ENCODE measurements at regions of chr7 and their contacts with region 1.

Region 1: GRCh38 chr7:80439894-80440821 is 71.7 kb downstream of the GNAT3 start:
- DNase-seq: no peak
- H3K4me3 ChIP-seq: no peak overlapping the region
- H3K27ac ChIP-seq: no peak overlapping the region
- H3K4me1 ChIP-seq: peaks cover 0 to 12% (median 0%) of the 10 kb centered on the region in 3 donors
- H3K27me3 ChIP-seq: no peaks in the 10 kb centered on the region
- CTCF ChIP-seq: no peak
- POLR2A ChIP-seq: no peak

Region 2: DNA sequence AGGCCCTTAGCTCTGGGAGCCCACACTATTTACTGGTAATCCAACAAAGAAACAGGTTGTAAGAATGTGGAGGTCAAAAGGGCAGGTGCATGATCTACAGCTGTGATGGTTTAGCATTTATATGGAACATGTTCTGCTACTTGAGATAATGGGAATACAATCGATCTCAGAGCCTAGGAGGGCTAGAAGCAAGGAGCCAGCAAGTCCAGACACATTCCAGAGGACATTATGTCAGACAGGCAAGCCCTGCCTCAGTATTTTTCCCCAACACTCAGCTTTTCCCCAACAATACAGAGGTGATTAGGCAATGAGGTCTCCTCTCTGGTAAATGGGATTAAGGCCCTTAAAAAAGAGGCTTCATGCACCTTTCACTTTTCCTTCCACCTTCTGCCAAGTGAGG is 93.1 kb after region 1 on chr7:
- intact Hi-C with region 1: no loop called
- DNase-seq: no peak
- H3K4me3 ChIP-seq: no peak overlapping the region
- H3K27ac ChIP-seq: no peak overlapping the region
- H3K4me1 ChIP-seq: peaks cover 0 to 5% (median 0%) of the 10 kb centered on the region in 3 donors
- H3K27me3 ChIP-seq: no peaks in the 10 kb centered on the region
- CTCF ChIP-seq: no peak
- POLR2A ChIP-seq: no peak

Region 3: GRCh38 chr7:80596933-80597517 is 156.9 kb after region 1 on chr7:
- intact Hi-C with region 1: no loop called
- DNase-seq: no peak
- H3K4me3 ChIP-seq: no peak overlapping the region
- H3K27ac ChIP-seq: no peak overlapping the region
- H3K4me1 ChIP-seq: no peaks in the 10 kb centered on the region
- H3K27me3 ChIP-seq: no peaks in the 10 kb centered on the region
- CTCF ChIP-seq: no peak
- POLR2A ChIP-seq: no peak

Region 4: DNA sequence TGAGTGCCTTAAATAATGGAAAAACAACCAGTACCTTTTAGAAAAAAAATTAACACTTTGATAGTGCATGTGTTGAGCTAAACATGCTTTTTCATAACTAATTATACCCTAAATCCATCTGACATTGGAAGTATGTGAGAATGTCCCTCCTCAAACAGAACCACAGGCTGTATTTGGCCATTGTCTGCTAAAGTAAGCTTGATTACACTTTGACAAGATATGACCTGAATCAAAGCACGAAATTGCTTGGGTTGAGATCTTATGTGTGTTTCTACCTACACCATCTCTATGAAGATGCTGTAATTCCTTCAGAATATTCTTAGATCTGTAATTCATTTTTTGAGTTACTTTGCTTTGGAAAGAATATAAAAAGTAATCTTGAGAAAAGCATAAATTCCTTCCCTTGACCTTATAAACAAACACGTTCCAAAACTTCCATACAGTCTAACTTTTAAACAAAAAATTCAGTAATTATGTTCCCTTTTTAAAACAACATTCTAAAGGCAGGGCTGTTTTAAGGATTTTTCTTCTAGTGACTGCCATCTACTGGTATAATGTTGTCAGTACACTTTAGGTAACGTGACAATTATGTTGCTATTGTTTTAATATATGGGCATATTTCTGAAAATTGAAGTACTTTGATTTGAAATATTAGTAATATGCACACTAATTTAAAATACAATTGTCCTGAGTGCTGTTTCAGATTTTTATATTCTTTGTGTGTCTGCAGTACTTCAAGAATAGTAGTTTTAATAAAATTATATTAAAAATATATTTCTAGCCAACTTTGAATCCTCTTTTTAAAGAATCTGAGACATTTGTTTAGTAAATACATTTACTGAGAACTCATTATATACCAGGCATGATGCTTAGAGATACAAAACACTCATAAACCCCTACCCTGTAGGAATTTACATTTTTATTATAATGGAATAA is 219.2 kb after region 1 on chr7:
- intact Hi-C with region 1: loop called (anchors 10 kb)
- DNase-seq: no peak
- H3K4me3 ChIP-seq: no peak overlapping the region
- H3K27ac ChIP-seq: no peak overlapping the region
- H3K4me1 ChIP-seq: peaks cover 0 to 14% (median 0%) of the 10 kb centered on the region in 3 donors
- H3K27me3 ChIP-seq: no peaks in the 10 kb centered on the region
- CTCF ChIP-seq: peak in 5 of 6 experiments; percentile 55 to 86 (median 61)
- POLR2A ChIP-seq: no peak

Measured in esophagus squamous epithelium (tissue), 5 donors.